Calu3 (cell line): ENCODE measurements at regions of chr21 and their contacts with region 1.

Region 1: GRCh38 chr21:35051287-35051818 is 2.3 kb upstream of the RUNX1 start:
- DNase-seq: peak; percentile 88
- H3K4me3 Mint-ChIP-seq: no peak overlapping the region
- H3K27ac Mint-ChIP-seq: peak overlapping the region; percentile 86
- H3K4me1 Mint-ChIP-seq: peaks cover 43% of the 10 kb centered on the region
- H3K27me3 Mint-ChIP-seq: no peaks in the 10 kb centered on the region
- CTCF ChIP-seq: peak; percentile 64

Region 2: GRCh38 chr21:34745557-34746255 is 305.6 kb before region 1 on chr21:
- CTCF ChIA-PET with region 1: interaction called, 8 read pairs
- intact Hi-C with region 1: loop called (anchors 10 kb)
- DNase-seq: peak; percentile 70
- H3K4me3 Mint-ChIP-seq: peak overlapping the region; percentile 37
- H3K27ac Mint-ChIP-seq: peak overlapping the region; percentile 58
- H3K4me1 Mint-ChIP-seq: peaks cover 30% of the 10 kb centered on the region
- H3K27me3 Mint-ChIP-seq: no peaks in the 10 kb centered on the region
- CTCF ChIP-seq: peak; percentile 63

Region 3: DNA sequence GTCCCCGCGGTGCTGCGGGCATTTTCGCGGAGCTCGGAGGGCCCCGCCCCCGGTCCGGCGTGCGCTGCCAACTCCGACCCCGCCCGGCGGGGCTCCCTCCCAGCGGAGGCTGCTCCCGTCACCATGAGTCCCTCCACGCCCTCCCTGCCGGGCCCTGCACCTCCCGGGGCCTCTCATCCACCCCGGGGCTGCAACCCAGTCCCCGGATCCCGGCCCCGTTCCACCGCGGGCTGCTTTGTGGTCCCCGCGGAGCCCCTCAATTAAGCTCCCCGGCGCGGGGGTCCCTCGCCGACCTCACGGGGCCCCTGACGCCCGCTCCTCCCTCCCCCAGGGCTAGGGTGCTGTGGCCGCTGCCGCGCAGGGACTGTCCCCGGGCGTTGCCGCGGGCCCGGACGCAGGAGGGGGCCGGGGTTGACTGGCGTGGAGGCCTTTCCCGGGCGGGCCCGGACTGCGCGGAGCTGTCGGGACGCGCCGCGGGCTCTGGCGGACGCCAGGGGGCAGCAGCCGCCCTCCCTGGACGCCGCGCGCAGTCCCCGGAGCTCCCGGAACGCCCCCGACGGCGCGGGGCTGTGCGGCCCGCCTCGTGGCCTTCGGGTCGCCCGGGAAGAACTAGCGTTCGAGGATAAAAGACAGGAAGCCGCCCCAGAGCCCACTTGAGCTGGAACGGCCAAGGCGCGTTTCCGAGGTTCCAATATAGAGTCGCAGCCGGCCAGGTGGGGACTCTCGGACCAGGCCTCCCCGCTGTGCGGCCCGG is 161.5 kb before region 1 on chr21:
- CTCF ChIA-PET with region 1: interaction called, 6 read pairs
- intact Hi-C with region 1: loop called (anchors 2 kb)
- DNase-seq: peak; percentile 84
- H3K4me3 Mint-ChIP-seq: peak overlapping the region; percentile 65
- H3K27ac Mint-ChIP-seq: peak overlapping the region; percentile 66
- H3K4me1 Mint-ChIP-seq: no peaks in the 10 kb centered on the region
- H3K27me3 Mint-ChIP-seq: no peaks in the 10 kb centered on the region
- CTCF ChIP-seq: peak; percentile 63

Region 4: DNA sequence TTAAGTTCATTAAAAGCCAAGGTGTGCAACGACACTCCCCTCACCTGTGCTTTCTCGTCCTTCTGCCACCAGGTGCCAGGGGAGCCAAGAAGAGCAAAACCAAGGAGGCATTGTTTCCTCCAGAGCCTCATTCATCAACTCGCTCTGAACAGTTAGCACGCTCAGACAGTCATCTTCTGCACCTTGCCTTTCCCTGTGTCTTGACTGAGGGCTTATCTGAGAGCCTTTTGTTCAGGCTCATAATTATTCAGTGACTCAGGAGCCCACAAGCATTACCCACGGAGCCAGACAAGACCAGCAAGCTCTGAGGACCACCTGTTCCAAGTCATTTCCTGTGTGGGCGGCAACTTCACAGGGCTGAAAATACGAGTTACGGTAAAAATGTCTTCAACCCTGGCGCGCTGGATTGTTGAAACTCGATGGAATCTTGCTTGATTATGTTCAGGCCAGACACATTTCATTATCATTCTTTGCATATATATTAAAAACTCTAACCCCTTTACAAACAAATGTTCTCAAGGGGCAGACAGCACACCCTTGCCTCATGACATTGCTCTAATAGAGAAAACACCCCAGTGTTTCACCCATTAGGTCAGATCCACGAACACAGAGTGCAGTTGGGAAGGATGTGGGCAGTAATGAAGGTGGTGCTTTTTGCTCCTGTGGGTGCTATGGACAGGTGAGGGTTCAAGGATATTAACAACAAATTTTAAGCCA is 87.5 kb after region 1 on chr21:
- CTCF ChIA-PET with region 1: interaction called, 7 read pairs
- intact Hi-C with region 1: loop called (anchors 1 kb)
- DNase-seq: peak; percentile 78
- H3K4me3 Mint-ChIP-seq: no peak overlapping the region
- H3K27ac Mint-ChIP-seq: peak overlapping the region; percentile 95
- H3K4me1 Mint-ChIP-seq: peaks cover 39% of the 10 kb centered on the region
- H3K27me3 Mint-ChIP-seq: no peaks in the 10 kb centered on the region
- CTCF ChIP-seq: no peak

Region 5: GRCh38 chr21:35150562-35151226 is 99.3 kb after region 1 on chr21:
- CTCF ChIA-PET with region 1: no interaction called
- intact Hi-C with region 1: no loop called
- DNase-seq: no peak
- H3K4me3 Mint-ChIP-seq: no peak overlapping the region
- H3K27ac Mint-ChIP-seq: peak overlapping the region; percentile 60
- H3K4me1 Mint-ChIP-seq: peaks cover 40% of the 10 kb centered on the region
- H3K27me3 Mint-ChIP-seq: no peaks in the 10 kb centered on the region
- CTCF ChIP-seq: no peak

Region 6: DNA sequence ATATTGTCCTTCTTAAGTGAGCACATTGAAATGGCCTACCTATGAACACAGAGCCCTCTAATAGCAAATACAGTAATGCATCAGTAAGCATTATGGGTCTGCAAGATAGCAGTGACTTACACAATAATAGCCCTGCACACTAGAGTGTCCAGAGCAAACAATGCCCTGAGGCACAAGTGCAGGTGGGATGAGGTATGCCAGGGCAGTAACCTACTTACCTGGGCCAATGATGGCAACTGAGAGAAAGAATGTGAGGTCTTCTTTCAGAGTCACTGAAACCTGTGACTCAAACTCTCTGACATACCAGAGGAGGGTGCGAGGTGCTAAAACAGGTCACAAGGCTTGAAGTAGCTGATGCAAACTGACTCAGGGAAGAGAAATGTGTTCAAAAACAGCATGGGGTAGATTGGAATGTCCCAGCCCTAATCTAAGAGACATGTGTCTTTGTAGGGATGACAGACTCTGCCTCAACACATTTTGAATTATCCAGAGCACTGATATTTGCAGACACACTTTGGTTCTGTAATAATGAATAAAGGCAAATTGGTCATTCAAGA is 166.2 kb after region 1 on chr21:
- CTCF ChIA-PET with region 1: no interaction called
- intact Hi-C with region 1: loop called (anchors 5 kb)
- DNase-seq: peak; percentile 79
- H3K4me3 Mint-ChIP-seq: no peak overlapping the region
- H3K27ac Mint-ChIP-seq: peak overlapping the region; percentile 95
- H3K4me1 Mint-ChIP-seq: peaks cover 46% of the 10 kb centered on the region
- H3K27me3 Mint-ChIP-seq: no peaks in the 10 kb centered on the region
- CTCF ChIP-seq: no peak

Region 7: GRCh38 chr21:35508139-35508888 is 457.0 kb after region 1 on chr21:
- CTCF ChIA-PET with region 1: interaction called, 3 read pairs
- intact Hi-C with region 1: loop called (anchors 5 kb)
- DNase-seq: peak; percentile 68
- H3K4me3 Mint-ChIP-seq: no peak overlapping the region
- H3K27ac Mint-ChIP-seq: no peak overlapping the region
- H3K4me1 Mint-ChIP-seq: peaks cover 47% of the 10 kb centered on the region
- H3K27me3 Mint-ChIP-seq: no peaks in the 10 kb centered on the region
- CTCF ChIP-seq: peak; percentile 25